HepG2 (cell line): ENCODE measurements at regions of chr4 and their contacts with region 1.

Region 1: DNA sequence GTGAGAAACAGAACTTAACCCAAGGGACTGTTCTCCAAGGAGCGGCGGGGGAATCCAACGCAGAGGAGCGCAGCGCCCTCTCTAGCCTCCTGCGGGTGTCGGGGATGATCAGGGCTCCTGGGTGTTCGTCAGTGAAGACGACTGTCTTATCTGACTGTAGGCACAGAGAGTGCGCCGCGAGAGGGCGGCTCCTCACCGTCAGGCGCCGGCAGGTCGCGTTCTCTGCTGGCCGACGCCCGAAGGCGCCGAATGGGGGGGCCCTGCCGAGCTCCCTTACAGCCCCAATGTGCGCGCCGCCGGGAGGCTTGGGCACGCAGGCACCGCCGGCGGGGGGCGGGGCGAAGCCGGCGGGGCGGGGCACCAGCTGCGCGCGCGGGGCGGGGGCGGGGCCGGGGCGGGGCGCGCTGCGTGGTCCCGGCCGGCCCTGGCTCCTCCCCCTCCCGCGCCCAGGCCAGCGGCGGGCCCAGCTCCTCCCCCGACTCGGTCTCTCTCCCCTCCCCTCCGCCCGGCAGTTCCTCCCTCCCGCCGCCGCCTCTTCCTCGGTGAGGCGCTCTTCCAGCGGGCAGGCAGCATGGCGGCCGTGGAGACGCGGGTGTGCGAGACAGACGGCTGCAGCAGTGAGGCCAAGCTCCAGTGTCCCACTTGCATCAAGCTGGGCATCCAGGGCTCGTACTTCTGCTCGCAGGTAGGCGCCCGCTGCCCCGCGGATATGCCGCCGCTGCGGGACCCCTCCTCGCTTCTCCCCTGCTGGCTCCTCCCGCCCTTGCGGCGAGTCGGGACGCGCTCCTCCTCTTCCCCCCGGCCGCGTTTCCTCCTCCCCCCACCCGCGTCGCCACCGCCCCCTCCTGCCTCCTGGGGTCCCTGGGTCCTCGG is at the start of gene METAP1:
- DNase-seq: peak; percentile 93
- ATAC-seq: peak; percentile 91
- H3K4me3 ChIP-seq: peak within 1 kb of the TSS; percentile 86 to 98 (median 90)
- H3K27ac ChIP-seq: peak within 1 kb of the TSS; percentile 88
- H3K4me1 ChIP-seq: peaks cover 35% of the 10 kb centered on the region
- H3K27me3 ChIP-seq: no peaks in the 10 kb centered on the region; a peak in 1 of 5 replicates
- CTCF ChIP-seq: peak; percentile 93
- EP300 ChIP-seq: peak in 1 of 2 experiments; percentile 34; a peak in 1 of 4 replicates
- POLR2A ChIP-seq: peak; percentile 77 to 94
- RAD21 ChIP-seq: peak; percentile 90
- total RNA-seq, gene METAP1: 44.9 and 64.9 TPM in 2 replicates

Region 2: DNA sequence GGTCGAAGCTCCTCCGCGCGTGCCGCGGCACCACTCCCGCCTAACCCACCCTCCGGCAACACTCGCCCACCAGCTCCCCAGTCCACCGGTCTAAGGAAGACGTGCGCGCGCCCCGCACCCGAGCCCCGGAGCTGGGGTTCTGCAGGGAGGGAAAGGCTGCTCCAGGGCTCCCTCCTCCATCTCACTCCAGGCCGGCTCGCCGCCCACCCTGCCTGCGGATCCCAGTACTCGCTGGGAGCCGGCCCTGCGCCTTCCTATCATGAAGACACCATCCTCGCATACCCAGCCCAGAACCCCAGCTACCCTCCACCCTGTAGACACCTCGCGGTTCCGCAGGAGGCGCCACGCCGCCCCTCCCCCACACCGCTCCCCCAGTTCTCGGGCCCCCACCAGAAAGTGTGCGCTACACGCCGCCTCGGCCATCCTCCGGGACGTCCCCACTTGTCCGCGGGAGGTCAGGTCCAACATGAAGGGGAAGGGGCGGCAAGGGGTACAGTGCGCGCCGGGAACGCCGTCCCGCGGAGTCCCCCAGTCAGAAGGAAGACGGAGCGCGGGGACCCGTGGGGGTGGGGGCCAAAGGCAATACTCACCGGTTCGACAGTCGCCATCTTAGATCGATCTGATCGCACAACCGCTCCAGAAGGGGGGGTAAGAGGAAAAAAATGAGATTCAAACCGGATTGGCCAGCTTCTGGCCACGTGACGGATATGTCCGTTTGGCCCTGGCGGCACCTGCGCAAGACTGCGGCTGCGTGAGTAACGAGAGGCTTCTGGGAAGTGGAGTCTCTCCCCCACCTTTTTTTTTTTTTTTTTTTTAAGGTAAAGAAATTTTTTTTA is 66.7 kb before region 1 on chr4 and contains the start of gene EIF4E:
- CTCF ChIA-PET with region 1: no interaction called
- POLR2A ChIA-PET with region 1: interaction called, 31 read pairs
- in situ Hi-C with region 1: no loop called
- intact Hi-C with region 1: loop called (anchors 1 kb)
- DNase-seq: peak; percentile 98
- ATAC-seq: peak; percentile 78
- H3K4me3 ChIP-seq: peak within 1 kb of the TSS; percentile 82 to 99 (median 93)
- H3K27ac ChIP-seq: peak within 1 kb of the TSS; percentile 95
- H3K4me1 ChIP-seq: peaks cover 30% of the 10 kb centered on the region
- H3K27me3 ChIP-seq: no peaks in the 10 kb centered on the region; a peak in 1 of 5 replicates
- CTCF ChIP-seq: peak; percentile 42
- EP300 ChIP-seq: 0 out of 4 replicates have a peak, but pooled peaks of 1 of the 2 experiments have one; percentile 39
- POLR2A ChIP-seq: peak; percentile 49 to 67; a peak in 3 of 4 replicates
- RAD21 ChIP-seq: no peak; the same call in 1 of the 2 replicates
- total RNA-seq, gene EIF4E: 194 and 288 TPM in 2 replicates

Region 3: GRCh38 chr4:99028187-99028586 is 32.8 kb after region 1 on chr4:
- CTCF ChIA-PET with region 1: no interaction called
- POLR2A ChIA-PET with region 1: interaction called, 10 read pairs
- in situ Hi-C with region 1: no loop called
- intact Hi-C with region 1: no loop called
- DNase-seq: peak; percentile 19
- ATAC-seq: peak; percentile 73
- H3K4me3 ChIP-seq: no peak overlapping the region; a peak in 1 of 6 replicates
- H3K27ac ChIP-seq: peak overlapping the region; percentile 59
- H3K4me1 ChIP-seq: peaks cover 85% of the 10 kb centered on the region
- H3K27me3 ChIP-seq: no peaks in the 10 kb centered on the region
- CTCF ChIP-seq: no peak
- EP300 ChIP-seq: no peak
- POLR2A ChIP-seq: no peak
- RAD21 ChIP-seq: no peak

Region 4: GRCh38 chr4:99054428-99054994 is 59.1 kb after region 1 on chr4:
- CTCF ChIA-PET with region 1: interaction called, 22 read pairs
- POLR2A ChIA-PET with region 1: interaction called, 23 read pairs
- in situ Hi-C with region 1: loop called (anchors 5 kb)
- intact Hi-C with region 1: loop called (anchors 1 kb)
- DNase-seq: no peak
- ATAC-seq: no peak
- H3K4me3 ChIP-seq: no peak overlapping the region
- H3K27ac ChIP-seq: no peak overlapping the region
- H3K4me1 ChIP-seq: 0 out of 2 replicates have a peak, but pooled peaks cover 6% of the 10 kb centered on the region
- H3K27me3 ChIP-seq: no peaks in the 10 kb centered on the region
- CTCF ChIP-seq: no peak
- EP300 ChIP-seq: no peak
- POLR2A ChIP-seq: no peak
- RAD21 ChIP-seq: no peak

Region 5: GRCh38 chr4:99100876-99101275 is 105.5 kb after region 1 on chr4:
- CTCF ChIA-PET with region 1: no interaction called
- POLR2A ChIA-PET with region 1: no interaction called
- in situ Hi-C with region 1: no loop called
- intact Hi-C with region 1: no loop called
- DNase-seq: no peak
- ATAC-seq: no peak
- H3K4me3 ChIP-seq: no peak overlapping the region
- H3K27ac ChIP-seq: no peak overlapping the region
- H3K4me1 ChIP-seq: no peaks in the 10 kb centered on the region
- H3K27me3 ChIP-seq: no peaks in the 10 kb centered on the region
- CTCF ChIP-seq: no peak
- EP300 ChIP-seq: no peak
- POLR2A ChIP-seq: no peak
- RAD21 ChIP-seq: no peak

Region 6: DNA sequence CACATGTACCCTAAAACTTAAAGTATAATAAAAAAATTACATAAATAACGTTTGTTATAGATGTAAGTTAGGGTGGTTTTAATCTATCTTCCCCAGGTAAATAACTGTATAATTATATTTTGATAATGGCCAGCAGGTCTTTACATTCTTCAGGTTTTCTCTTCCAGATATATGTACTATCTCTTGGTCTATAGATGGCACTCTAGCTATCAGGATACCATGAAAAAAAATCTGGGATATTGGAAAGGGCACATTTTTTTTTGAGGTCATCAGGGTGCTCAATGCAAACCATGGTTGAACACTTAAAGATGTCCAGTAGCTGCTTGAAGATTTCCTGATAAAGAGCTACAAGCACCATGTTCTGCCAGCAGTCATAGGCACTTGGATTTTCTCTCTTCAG is 164.3 kb after region 1 on chr4:
- CTCF ChIA-PET with region 1: no interaction called
- POLR2A ChIA-PET with region 1: no interaction called
- in situ Hi-C with region 1: no loop called
- intact Hi-C with region 1: loop called (anchors 1 kb)
- DNase-seq: peak; percentile 20
- ATAC-seq: no peak
- H3K4me3 ChIP-seq: no peak overlapping the region
- H3K27ac ChIP-seq: no peak overlapping the region
- H3K4me1 ChIP-seq: peaks cover 70% of the 10 kb centered on the region
- H3K27me3 ChIP-seq: no peaks in the 10 kb centered on the region
- CTCF ChIP-seq: peak; percentile 56
- EP300 ChIP-seq: no peak
- POLR2A ChIP-seq: no peak
- RAD21 ChIP-seq: peak; percentile 46; the same call in 1 of the 2 replicates

Region 7: DNA sequence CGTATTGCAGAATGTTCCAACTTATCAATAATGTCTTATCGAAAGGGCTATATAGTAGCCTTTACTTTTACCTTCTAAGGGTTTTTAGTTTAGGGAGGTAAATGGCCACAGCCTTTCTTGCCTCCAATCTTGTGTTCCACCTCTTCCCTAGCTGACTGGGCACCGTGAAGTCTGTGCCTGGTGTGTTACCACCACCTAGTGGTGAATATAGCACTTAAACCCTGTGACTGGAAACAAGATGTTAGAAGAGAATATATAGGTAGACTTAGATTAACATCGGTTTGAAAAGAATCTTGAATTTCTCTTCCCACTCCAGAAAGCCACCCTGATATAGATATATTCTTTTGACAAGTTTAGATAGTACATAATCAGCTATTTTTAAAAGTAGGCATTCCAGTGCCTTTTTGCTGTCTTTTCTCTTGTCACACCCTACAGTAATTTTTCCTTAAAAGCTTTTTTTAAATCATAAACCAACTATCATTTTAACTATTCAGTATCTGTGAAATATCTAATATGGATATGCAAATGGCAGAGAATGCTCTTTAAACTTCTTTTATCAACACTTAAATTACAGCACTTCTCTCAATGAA is 467.6 kb after region 1 on chr4:
- CTCF ChIA-PET with region 1: interaction called, 3 read pairs
- POLR2A ChIA-PET with region 1: no interaction called
- in situ Hi-C with region 1: no loop called
- intact Hi-C with region 1: loop called (anchors 1 kb)
- DNase-seq: peak; percentile 66
- ATAC-seq: peak; percentile 96
- H3K4me3 ChIP-seq: no peak overlapping the region
- H3K27ac ChIP-seq: no peak overlapping the region
- H3K4me1 ChIP-seq: peaks cover 9% of the 10 kb centered on the region
- H3K27me3 ChIP-seq: no peaks in the 10 kb centered on the region; a peak in 1 of 5 replicates
- CTCF ChIP-seq: peak; percentile 88
- EP300 ChIP-seq: no peak
- POLR2A ChIP-seq: no peak
- RAD21 ChIP-seq: peak; percentile 86

Region 8: DNA sequence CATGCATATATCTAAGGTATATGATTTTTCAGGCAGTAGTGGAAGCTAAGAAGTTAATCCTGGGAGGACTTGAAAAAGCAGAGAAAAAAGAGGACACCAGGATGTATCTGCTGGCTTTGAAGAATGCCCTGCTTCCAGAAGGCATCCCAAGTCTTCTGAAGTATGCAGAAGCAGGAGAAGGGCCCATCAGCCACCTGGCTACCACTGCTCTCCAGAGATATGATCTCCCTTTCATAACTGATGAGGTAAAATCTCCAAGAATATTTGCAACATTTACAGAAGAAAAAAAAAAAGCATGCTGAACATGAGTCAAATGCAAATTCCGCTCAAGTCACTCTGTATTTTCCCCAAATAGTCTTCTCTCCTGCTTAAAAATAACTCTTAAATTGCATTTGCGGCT is 611.3 kb after region 1 on chr4:
- CTCF ChIA-PET with region 1: no interaction called
- POLR2A ChIA-PET with region 1: no interaction called
- in situ Hi-C with region 1: no loop called
- intact Hi-C with region 1: no loop called
- DNase-seq: no peak
- ATAC-seq: no peak
- H3K4me3 ChIP-seq: no peak overlapping the region
- H3K27ac ChIP-seq: no peak overlapping the region
- H3K4me1 ChIP-seq: no peaks in the 10 kb centered on the region
- H3K27me3 ChIP-seq: no peaks in the 10 kb centered on the region
- CTCF ChIP-seq: no peak
- EP300 ChIP-seq: no peak
- POLR2A ChIP-seq: no peak
- RAD21 ChIP-seq: no peak